Activated B cell treated with CpG ODN at 0.5 μM for 24 hours (primary cell): ENCODE measurements at regions of chr5 and their contacts with region 1.

Region 1: DNA sequence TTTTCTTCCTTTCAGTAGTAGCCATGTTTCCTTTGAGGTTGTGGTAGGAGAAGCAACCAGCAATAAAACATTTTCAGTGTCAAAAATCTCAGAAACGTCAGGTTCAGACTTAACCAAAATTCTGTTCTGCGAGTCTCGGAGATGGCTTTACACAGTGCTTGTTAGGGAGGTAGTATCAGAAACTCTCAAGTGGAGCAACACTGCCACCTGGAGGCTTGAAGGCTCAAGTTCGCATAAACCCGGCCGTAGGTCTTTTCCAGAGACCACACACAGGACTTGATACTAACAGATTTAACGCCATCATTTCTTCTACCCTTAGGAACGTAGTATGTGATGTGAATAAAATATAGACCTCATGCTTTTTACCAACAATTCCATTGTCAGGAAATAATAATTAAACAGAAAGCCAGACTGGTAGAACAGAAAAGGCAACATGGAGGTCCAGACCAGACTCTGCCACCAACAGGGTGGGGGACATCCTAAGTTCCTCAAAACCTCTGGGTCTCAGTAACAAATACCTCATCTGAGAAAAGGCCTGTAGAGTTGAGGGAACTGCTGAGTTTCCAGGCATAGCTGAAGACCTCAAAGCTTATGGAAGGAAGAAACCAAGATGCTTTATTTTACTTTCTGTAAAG is 8.5 kb downstream of the PTGER4 start:
- DNase-seq: peak; percentile 63
- ATAC-seq: peak; percentile 82
- H3K4me3 Mint-ChIP-seq: peak overlapping the region; percentile 70
- H3K27ac Mint-ChIP-seq: peak overlapping the region; percentile 57
- H3K4me1 Mint-ChIP-seq: peaks cover 70% of the 10 kb centered on the region
- H3K27me3 Mint-ChIP-seq: no peaks in the 10 kb centered on the region
- CTCF ChIP-seq: no peak

Region 2: GRCh38 chr5:39578887-39579497 is 1109.3 kb before region 1 on chr5:
- CTCF ChIA-PET with region 1: no interaction called
- POLR2A ChIA-PET with region 1: interaction called, 5 read pairs
- intact Hi-C with region 1: loop called (anchors 1 kb)
- DNase-seq: no peak
- ATAC-seq: no peak
- H3K4me3 Mint-ChIP-seq: no peak overlapping the region
- H3K27ac Mint-ChIP-seq: no peak overlapping the region
- H3K4me1 Mint-ChIP-seq: peaks cover 8% of the 10 kb centered on the region
- H3K27me3 Mint-ChIP-seq: peaks cover 2% of the 10 kb centered on the region
- CTCF ChIP-seq: peak; percentile 63

Region 3: GRCh38 chr5:39854771-39855410 is 833.4 kb before region 1 on chr5:
- CTCF ChIA-PET with region 1: no interaction called
- POLR2A ChIA-PET with region 1: no interaction called
- intact Hi-C with region 1: no loop called
- DNase-seq: no peak
- ATAC-seq: no peak
- H3K4me3 Mint-ChIP-seq: no peak overlapping the region
- H3K27ac Mint-ChIP-seq: no peak overlapping the region
- H3K4me1 Mint-ChIP-seq: no peaks in the 10 kb centered on the region
- H3K27me3 Mint-ChIP-seq: peaks cover 1% of the 10 kb centered on the region
- CTCF ChIP-seq: no peak

Region 4: GRCh38 chr5:39948867-39949468 is 739.3 kb before region 1 on chr5:
- CTCF ChIA-PET with region 1: interaction called, 30 read pairs
- POLR2A ChIA-PET with region 1: interaction called, 4 read pairs
- intact Hi-C with region 1: loop called (anchors 1 kb)
- DNase-seq: no peak
- ATAC-seq: peak; percentile 83
- H3K4me3 Mint-ChIP-seq: no peak overlapping the region
- H3K27ac Mint-ChIP-seq: no peak overlapping the region
- H3K4me1 Mint-ChIP-seq: peaks cover 3% of the 10 kb centered on the region
- H3K27me3 Mint-ChIP-seq: no peaks in the 10 kb centered on the region
- CTCF ChIP-seq: no peak

Region 5: GRCh38 chr5:40165794-40166728 is 522.2 kb before region 1 on chr5:
- CTCF ChIA-PET with region 1: interaction called, 8 read pairs
- POLR2A ChIA-PET with region 1: no interaction called
- intact Hi-C with region 1: loop called (anchors 1 kb)
- DNase-seq: no peak
- ATAC-seq: no peak
- H3K4me3 Mint-ChIP-seq: no peak overlapping the region
- H3K27ac Mint-ChIP-seq: no peak overlapping the region
- H3K4me1 Mint-ChIP-seq: no peaks in the 10 kb centered on the region
- H3K27me3 Mint-ChIP-seq: no peaks in the 10 kb centered on the region
- CTCF ChIP-seq: no peak

Region 6: DNA sequence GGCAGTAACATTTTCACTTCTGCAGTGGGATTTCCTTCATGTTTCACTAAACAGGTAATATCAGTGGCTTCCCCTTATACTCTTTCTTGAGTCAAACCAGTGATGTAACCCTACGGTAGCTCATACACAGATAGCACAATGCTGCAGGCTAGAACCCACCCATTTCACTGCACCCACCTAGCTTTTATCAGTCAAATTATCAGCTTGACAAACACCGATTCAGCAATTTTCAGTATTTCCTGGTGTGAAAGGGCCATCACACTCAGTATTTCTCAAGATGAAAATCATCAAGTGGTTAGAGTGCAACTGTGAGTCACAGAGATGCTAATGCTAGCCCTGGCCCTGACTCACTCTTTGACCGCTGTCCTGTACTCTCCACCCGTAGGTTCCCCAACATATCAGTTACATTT is 250.8 kb before region 1 on chr5:
- CTCF ChIA-PET with region 1: interaction called, 3 read pairs
- POLR2A ChIA-PET with region 1: interaction called, 4 read pairs
- intact Hi-C with region 1: loop called (anchors 2 kb)
- DNase-seq: no peak
- ATAC-seq: peak; percentile 80
- H3K4me3 Mint-ChIP-seq: peak overlapping the region; percentile 56
- H3K27ac Mint-ChIP-seq: peak overlapping the region; percentile 54
- H3K4me1 Mint-ChIP-seq: peaks cover 45% of the 10 kb centered on the region
- H3K27me3 Mint-ChIP-seq: no peaks in the 10 kb centered on the region
- CTCF ChIP-seq: no peak

Region 7: GRCh38 chr5:40879163-40879942 is 191.1 kb after region 1 on chr5:
- CTCF ChIA-PET with region 1: no interaction called
- POLR2A ChIA-PET with region 1: no interaction called
- intact Hi-C with region 1: loop called (anchors 1 kb)
- DNase-seq: no peak
- ATAC-seq: peak; percentile 28
- H3K4me3 Mint-ChIP-seq: no peak overlapping the region
- H3K27ac Mint-ChIP-seq: no peak overlapping the region
- H3K4me1 Mint-ChIP-seq: no peaks in the 10 kb centered on the region
- H3K27me3 Mint-ChIP-seq: no peaks in the 10 kb centered on the region
- CTCF ChIP-seq: peak; percentile 20